ENCODE measurements at regions of chr3 and their contacts with region 1.

Region 1: GRCh38 chr3:45224824-45225464 is 1.1 kb downstream of the TMEM158 start:
- DNase-seq: no peak
- H3K4me3 ChIP-seq: peak overlapping the region; percentile 64
- H3K27me3 ChIP-seq: peaks cover 2% of the 10 kb centered on the region; the same call in 1 of the 2 replicates
- CTCF ChIP-seq: peak; percentile 59

Region 2: GRCh38 chr3:45084820-45085816 is 139.8 kb before region 1 on chr3:
- CTCF ChIA-PET with region 1: no interaction called
- POLR2A ChIA-PET with region 1: no interaction called
- DNase-seq: peak; percentile 73
- H3K4me3 ChIP-seq: no peak overlapping the region
- H3K27me3 ChIP-seq: no peaks in the 10 kb centered on the region
- CTCF ChIP-seq: no peak; the same call in 1 of the 2 replicates

Region 3: DNA sequence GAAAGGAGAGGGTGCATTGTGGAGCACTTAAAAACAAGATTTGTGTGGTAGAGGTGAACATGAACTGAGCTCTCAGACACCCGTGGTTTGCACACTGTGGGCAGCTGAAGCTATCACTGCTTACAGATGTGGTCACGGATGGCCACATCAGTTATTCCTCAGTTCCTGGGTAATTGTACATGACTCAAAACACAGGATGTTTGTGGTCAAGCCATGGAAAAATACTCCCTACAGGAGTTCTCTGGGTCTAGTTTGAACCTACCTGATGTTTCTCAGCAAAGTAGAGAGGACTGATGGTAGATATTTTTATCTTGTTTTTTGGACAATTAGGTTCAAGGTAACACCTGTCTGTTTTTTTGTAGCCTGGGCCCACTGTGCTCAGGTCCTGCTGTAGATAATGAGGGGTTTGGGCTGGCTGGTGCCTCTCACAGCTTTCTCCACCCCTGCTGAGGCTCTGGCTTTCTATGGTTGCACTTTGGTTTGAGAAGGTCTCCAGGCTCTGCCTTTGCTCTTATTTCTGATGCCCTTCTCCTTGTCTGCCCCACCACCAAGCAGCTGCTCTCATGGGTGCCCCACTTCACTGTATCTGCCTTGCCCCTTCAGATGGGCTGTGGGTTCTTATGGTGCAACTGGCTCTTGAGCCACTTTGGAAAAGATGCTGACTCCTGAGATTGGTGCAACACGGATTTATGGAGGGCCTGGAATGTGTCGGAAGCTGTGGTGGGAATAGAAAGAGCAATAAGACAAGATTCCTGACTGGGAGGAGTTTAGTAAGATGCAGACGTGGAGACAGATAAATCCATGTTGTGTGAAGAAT is 118.9 kb before region 1 on chr3:
- CTCF ChIA-PET with region 1: no interaction called
- POLR2A ChIA-PET with region 1: no interaction called
- DNase-seq: no peak
- H3K4me3 ChIP-seq: no peak overlapping the region
- H3K27me3 ChIP-seq: no peaks in the 10 kb centered on the region
- CTCF ChIP-seq: no peak

Region 4: GRCh38 chr3:45182915-45183867 is 41.8 kb before region 1 on chr3:
- CTCF ChIA-PET with region 1: no interaction called
- POLR2A ChIA-PET with region 1: no interaction called
- DNase-seq: no peak
- H3K4me3 ChIP-seq: no peak overlapping the region
- H3K27me3 ChIP-seq: no peaks in the 10 kb centered on the region
- CTCF ChIP-seq: no peak

Region 5: GRCh38 chr3:45236964-45237363 is 12.0 kb after region 1 on chr3:
- CTCF ChIA-PET with region 1: no interaction called
- POLR2A ChIA-PET with region 1: no interaction called
- DNase-seq: no peak
- H3K4me3 ChIP-seq: no peak overlapping the region
- H3K27me3 ChIP-seq: peaks cover 2% of the 10 kb centered on the region; the same call in 1 of the 2 replicates
- CTCF ChIP-seq: no peak

Region 6: DNA sequence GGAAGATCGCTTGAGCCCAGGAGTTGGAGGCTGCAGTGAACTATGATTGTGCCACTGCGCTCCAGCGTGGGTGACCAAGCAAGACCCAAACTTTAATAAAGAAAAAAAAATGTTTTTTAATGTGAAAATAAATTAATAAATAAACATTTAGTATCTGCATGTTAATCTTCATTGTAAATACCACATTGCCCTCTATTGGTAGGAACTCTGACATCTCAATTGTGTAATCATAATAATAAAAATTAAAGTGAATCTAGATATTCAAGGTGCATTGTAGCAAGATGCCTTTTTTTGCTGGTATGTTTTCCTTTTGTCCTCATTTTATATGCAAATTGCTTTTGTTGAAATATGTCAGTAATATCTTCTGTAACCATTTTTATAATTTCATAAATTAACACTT is 274.6 kb after region 1 on chr3:
- CTCF ChIA-PET with region 1: interaction called, 30 read pairs
- POLR2A ChIA-PET with region 1: no interaction called
- DNase-seq: no peak
- H3K4me3 ChIP-seq: no peak overlapping the region
- H3K27me3 ChIP-seq: no peaks in the 10 kb centered on the region
- CTCF ChIP-seq: peak; percentile 38

Region 7: GRCh38 chr3:45507820-45508317 is 282.9 kb after region 1 on chr3:
- CTCF ChIA-PET with region 1: interaction called, 70 read pairs
- POLR2A ChIA-PET with region 1: no interaction called
- DNase-seq: no peak
- H3K4me3 ChIP-seq: no peak overlapping the region
- H3K27me3 ChIP-seq: no peaks in the 10 kb centered on the region
- CTCF ChIP-seq: peak; percentile 64

Measured in BJ (cell line).